CD4-positive, alpha-beta T cell (primary cell): ENCODE measurements at regions of chr10 and their contacts with region 1.

Region 1: GRCh38 chr10:93554760-93555432 is 11.6 kb upstream of the FFAR4 start:
- DNase-seq: peak in 11 of 14 experiments; percentile 5 to 64 (median 20)
- ATAC-seq: no peak
- H3K4me3 ChIP-seq: no peak overlapping the region
- H3K4me3 Mint-ChIP-seq: no peak overlapping the region
- H3K27ac ChIP-seq: no peak overlapping the region
- H3K27ac Mint-ChIP-seq: no peak overlapping the region
- H3K4me1 ChIP-seq: no peaks in the 10 kb centered on the region
- H3K4me1 Mint-ChIP-seq: no peaks in the 10 kb centered on the region
- H3K27me3 ChIP-seq: peaks cover 5 to 6% of the 10 kb centered on the region in 2 experiments
- H3K27me3 Mint-ChIP-seq: peaks cover 19% of the 10 kb centered on the region
- CTCF ChIP-seq: peak; percentile 39

Region 2: DNA sequence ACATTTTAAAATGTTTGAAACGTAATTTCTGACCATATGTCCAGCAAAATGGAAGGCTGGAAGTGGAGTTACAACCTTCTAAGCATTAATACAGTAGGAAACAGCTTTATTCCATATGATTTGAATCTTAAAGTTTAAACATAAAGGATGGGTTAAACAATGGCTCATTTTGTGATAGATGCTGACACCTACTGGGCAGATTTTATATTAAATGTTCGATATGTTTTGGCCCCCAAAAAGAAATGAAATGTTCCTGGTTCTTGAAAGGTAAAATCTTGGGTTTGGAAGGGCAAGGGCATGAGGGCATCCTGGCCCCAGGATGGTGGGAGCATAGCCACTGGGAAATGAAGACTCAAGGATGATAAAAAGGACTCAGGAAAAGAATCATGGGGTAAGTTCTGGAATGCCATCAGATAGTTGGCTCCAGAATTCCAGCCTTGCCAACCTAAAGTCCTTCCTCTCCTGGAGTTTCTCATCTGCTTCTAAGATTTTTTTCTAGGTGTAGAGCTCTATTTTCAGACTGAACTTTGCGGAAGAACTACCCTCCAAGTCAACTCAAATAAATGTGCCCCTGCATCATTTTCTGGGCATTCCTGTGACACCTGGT is 304.3 kb after region 1 on chr10:
- CTCF ChIA-PET with region 1: no interaction called
- POLR2A ChIA-PET with region 1: no interaction called
- intact Hi-C with region 1: loop called (anchors 2 to 5 kb)
- DNase-seq: peak in 3 of 14 experiments; percentile 6 to 15 (median 13)
- ATAC-seq: no peak
- H3K4me3 ChIP-seq: no peak overlapping the region
- H3K4me3 Mint-ChIP-seq: no peak overlapping the region
- H3K27ac ChIP-seq: no peak overlapping the region
- H3K27ac Mint-ChIP-seq: no peak overlapping the region
- H3K4me1 ChIP-seq: no peaks in the 10 kb centered on the region
- H3K4me1 Mint-ChIP-seq: no peaks in the 10 kb centered on the region
- H3K27me3 ChIP-seq: peaks cover 0 to 3% of the 10 kb centered on the region in 2 experiments
- H3K27me3 Mint-ChIP-seq: no peaks in the 10 kb centered on the region
- CTCF ChIP-seq: peak; percentile 57

Region 3: DNA sequence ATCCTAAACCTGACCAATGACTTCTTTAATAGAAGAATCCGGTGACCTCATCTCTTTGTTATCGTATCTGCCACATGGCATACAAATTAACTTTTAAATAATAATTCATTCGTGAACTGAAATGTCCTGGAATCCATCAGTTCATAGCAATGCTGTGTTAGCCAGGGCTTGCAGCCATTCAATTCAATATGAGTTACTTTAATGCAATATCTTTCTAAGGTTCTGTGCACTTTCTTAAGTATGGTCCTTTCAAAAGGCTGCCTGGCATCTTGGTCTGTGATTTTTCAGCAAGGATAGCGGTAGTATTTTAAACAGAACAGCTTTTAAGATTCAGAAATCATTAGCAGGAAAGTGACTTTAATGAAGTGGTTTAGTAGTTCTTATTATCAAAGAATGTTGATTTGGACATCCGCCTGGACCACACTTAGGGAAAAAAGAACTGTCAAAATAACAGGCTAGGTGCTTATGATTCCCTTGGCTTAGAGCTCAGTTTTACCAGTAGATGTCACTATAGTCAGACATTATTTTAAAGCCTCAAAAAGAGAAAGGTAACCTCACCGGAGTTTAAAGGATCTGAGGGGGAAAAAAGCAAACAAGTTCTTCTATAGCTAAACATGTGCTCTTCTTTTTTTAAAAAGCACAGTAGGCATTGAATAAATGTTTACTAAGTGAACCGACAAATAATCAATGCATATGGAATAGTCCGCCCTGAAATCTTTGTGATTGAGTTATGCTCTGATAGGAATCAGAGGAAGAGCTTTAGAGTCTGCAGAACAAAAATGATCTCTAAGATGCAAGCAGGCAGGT is 361.6 kb after region 1 on chr10:
- CTCF ChIA-PET with region 1: no interaction called
- POLR2A ChIA-PET with region 1: no interaction called
- intact Hi-C with region 1: loop called in 1 of 2 experiments (anchors 2 kb)
- DNase-seq: no peak
- ATAC-seq: no peak
- H3K4me3 ChIP-seq: no peak overlapping the region
- H3K4me3 Mint-ChIP-seq: no peak overlapping the region
- H3K27ac ChIP-seq: no peak overlapping the region
- H3K27ac Mint-ChIP-seq: no peak overlapping the region
- H3K4me1 ChIP-seq: no peaks in the 10 kb centered on the region
- H3K4me1 Mint-ChIP-seq: no peaks in the 10 kb centered on the region
- H3K27me3 ChIP-seq: no peaks in the 10 kb centered on the region
- H3K27me3 Mint-ChIP-seq: no peaks in the 10 kb centered on the region
- CTCF ChIP-seq: no peak